ENCODE measurements at regions of chr11 and their contacts with region 1.

Region 1: DNA sequence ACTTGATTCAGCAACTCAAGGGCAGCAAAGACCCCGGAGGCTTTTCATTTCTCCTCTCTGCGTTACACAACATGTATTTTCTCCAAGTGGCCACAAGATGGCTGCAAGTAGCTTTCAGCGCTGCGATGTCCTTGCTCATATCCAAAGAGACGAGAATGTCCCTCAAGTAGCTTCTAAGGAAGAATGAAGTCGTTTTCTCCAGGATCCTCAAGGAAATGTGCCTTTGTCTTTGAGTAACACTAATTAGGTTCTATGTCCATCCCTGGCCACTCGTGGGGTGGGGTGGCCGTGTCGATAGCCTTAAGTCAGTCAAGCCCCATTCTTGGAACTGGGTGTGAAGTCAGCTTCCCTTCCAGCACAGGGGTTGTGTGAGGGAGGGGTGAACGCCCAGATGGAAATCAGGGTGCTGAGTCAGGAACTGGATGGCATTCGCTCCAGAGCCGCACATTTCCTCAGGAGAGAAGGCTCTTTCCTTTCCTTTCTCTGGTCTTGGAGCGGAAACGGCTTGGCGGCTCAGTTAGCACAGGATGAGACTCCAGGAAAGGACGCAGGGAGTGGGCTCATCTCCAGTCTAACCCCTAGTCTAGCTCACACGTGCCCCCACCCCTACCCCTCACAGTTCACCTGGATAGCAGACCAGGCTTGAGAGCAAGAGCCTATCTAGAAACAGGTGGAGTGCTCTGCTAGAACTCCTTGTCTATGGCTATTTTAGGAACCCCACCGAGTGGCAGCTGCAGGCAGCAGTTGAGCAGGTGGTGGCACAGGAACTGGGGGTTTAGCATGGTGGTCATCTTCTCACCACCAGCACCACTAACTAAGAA is 44.3 kb downstream of the NNMT start:
- H3K4me3 Mint-ChIP-seq: peak overlapping the region; percentile 62
- H3K27ac Mint-ChIP-seq: no peak overlapping the region
- H3K4me1 Mint-ChIP-seq: peaks cover 14% of the 10 kb centered on the region
- H3K27me3 Mint-ChIP-seq: peaks cover 11% of the 10 kb centered on the region

Region 2: GRCh38 chr11:114439229-114440120 is 99.0 kb after region 1 on chr11 and contains the start of gene REXO2:
- intact Hi-C with region 1: loop called (anchors 5 kb)
- H3K4me3 Mint-ChIP-seq: peak within 1 kb of the TSS; percentile 97
- H3K27ac Mint-ChIP-seq: peak within 1 kb of the TSS; percentile 79
- H3K4me1 Mint-ChIP-seq: peaks cover 15% of the 10 kb centered on the region
- H3K27me3 Mint-ChIP-seq: no peaks in the 10 kb centered on the region

Region 3: GRCh38 chr11:114762408-114762807 is 421.9 kb after region 1 on chr11:
- intact Hi-C with region 1: loop called (anchors 5 kb)
- H3K4me3 Mint-ChIP-seq: no peak overlapping the region
- H3K27ac Mint-ChIP-seq: no peak overlapping the region
- H3K4me1 Mint-ChIP-seq: no peaks in the 10 kb centered on the region
- H3K27me3 Mint-ChIP-seq: no peaks in the 10 kb centered on the region